ENCODE measurements at regions of chr11 and their contacts with region 1.

Region 1: DNA sequence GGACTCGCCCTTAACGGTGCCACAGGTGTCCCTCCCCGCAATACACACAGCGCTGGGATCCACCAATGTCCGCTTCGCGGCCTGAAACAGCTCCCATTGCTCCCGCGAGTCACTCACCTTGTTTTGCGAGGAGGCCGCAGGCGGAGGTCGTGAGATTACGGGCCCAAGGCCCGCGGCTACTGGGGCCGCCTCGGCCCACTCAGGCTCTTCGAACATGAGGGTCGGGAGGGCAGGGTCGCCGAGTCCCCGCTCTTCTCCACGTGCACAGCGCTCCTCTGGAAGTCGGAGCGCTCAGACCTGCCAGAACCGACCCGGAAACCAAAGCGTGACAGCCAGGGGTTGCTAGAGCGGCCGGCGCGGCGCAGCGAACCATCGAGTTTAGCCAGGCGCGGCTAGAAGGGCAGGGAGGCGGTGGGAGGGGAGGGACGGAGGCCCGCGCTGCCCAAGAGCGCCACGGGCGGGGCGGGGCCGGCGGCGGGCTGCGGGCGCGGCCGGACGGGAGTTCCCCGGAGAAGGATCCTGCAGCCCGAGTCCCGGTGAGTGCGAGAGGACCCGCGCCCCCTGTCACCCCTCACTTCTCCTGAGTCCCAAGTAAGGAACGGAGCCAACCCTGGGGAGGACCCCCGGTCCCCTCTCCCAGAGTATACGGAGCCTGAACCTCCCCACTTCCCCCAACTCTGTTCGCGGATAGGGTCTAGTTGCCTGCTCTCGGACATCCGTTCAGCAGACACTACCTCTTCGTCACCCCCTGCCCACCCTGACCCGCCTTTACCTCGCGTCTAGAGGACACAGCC is at the starts of genes ILK and RRP8:
- DNase-seq: peak; percentile 89
- ATAC-seq: peak; percentile 80
- H3K4me3 ChIP-seq: peak within 1 kb of the TSS; percentile 93
- H3K27ac ChIP-seq: 0 out of 2 replicates have a peak within 1 kb of the TSS, but pooled peaks have one; percentile 5
- H3K4me1 ChIP-seq: peaks cover 38% of the 10 kb centered on the region
- H3K27me3 ChIP-seq: no peaks in the 10 kb centered on the region
- CTCF ChIP-seq: no peak
- total RNA-seq, gene ILK: 73.0 and 73.9 TPM in 2 replicates
- total RNA-seq, gene RRP8: 15.1 and 16.9 TPM in 2 replicates

Region 2: DNA sequence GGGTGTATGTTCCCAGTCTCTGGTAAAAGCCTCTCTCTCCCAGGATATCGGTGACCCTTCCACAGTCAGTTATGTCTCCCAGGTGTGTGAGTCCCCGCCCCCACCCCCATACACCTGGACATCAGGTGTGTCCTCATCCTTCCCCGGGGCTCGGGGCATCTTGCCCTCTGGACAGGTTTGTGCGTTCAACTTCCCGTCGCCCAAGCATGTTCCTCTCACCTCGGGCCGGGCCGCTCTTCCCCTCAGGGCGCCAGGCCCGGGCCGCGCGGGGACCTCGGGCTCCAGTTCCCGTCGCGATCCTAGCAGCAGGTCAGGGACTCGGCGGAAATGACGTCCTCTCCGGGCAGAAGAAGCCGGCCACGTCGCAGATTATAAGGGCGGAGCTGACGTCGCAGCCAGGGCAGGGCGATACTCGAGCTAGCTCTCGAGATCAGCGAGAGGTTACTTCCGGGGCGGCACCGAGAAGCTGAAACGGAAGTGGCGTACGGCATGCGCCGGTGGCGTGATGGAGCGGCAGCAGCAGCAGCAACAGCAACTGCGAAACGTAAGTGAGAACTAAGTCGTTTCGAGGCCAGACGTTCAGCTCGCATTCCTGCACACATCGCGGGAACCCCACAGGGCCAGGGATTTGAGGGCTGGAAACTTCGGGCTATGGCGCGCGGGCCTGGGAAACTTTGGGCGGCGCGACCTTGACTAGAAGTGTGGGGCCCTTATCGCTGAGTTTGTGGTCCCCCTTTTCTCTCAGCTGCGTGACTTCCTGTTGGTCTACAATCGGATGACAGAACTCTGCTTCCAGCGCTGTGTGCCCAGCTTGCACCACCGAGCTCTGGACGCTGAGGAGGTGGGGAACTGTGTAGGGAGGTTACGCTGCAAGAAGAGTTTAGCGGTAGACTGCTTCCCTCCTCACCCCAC is 122.2 kb before region 1 on chr11 and contains the starts of genes ARFIP2 and TIMM10B:
- CTCF ChIA-PET with region 1: no interaction called
- POLR2A ChIA-PET with region 1: no interaction called
- intact Hi-C with region 1: loop called (anchors 5 kb)
- DNase-seq: peak; percentile 97
- ATAC-seq: peak; percentile 95
- H3K4me3 ChIP-seq: peak within 1 kb of the TSS; percentile 95
- H3K27ac ChIP-seq: peak within 1 kb of the TSS; percentile 73
- H3K4me1 ChIP-seq: peaks cover 17% of the 10 kb centered on the region
- H3K27me3 ChIP-seq: no peaks in the 10 kb centered on the region
- CTCF ChIP-seq: no peak
- total RNA-seq, gene ARFIP2: 57.2 and 65.2 TPM in 2 replicates
- total RNA-seq, gene TIMM10B: 25.5 and 26.4 TPM in 2 replicates

Region 3: DNA sequence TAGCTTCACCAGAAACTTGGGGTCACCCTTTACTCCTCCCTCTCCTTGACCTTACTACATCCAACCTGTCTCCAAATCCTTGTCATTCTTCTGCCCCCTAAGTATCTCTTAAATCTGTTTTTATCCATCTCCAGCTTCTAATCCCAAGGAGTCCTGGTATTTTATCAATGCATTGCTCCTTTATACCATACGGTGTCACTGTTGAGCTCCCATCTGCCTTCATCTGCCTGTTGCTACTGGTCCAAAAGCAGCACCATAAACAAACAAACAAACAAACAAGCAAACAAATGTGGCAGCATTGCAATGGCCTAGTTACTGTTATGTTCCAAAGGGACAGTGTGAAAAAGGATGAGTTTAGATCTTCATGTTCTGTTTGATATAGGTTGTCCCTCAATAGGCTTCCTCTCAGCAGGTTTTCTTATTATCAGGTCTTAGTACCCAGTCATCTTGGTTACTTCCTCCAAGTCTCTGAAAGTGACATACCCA is 72.2 kb before region 1 on chr11:
- CTCF ChIA-PET with region 1: no interaction called
- POLR2A ChIA-PET with region 1: no interaction called
- intact Hi-C with region 1: loop called (anchors 5 kb)
- DNase-seq: peak; percentile 60
- ATAC-seq: peak; percentile 71
- H3K4me3 ChIP-seq: no peak overlapping the region
- H3K27ac ChIP-seq: no peak overlapping the region
- H3K4me1 ChIP-seq: no peaks in the 10 kb centered on the region
- H3K27me3 ChIP-seq: no peaks in the 10 kb centered on the region
- CTCF ChIP-seq: peak; percentile 82

Region 4: DNA sequence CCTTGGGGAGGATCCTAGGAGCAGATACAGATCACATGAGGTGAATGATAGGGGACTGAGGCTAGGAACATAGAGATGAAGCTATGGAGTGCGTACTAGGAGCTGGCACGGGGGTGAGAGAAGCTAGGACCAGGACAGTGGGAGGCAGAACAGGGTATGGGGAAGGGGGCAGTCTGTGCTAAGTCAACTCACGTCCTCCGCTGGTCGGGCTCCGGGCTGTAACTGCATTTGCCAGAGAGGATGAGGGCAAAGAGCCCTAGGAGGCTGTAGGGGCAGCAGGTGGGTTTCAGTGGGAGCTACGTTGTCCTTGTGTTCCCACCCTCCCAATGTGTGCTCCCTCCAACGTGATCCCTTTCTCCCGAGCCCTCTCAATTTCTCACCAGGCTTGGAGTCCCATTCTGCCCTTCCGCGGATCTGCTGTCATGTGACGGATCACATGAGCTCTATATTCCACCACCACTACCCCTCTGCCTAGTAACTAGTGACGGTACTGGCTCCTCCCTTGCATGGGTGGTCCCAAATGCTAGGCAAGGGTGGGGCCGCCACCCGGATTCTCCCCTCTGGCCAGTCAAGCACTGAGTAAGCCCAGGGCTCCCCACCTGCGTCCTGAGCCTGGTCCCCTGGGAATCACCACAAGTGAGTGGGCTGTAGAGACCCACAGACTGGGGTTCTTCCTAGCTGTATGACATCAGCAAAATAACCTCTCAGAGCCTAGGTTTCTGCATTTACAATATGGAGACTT is 15.7 kb after region 1 on chr11 and contains the start of gene TPP1:
- CTCF ChIA-PET with region 1: interaction called, 10 read pairs
- POLR2A ChIA-PET with region 1: no interaction called
- intact Hi-C with region 1: no loop called
- DNase-seq: peak; percentile 93
- ATAC-seq: peak; percentile 90
- H3K4me3 ChIP-seq: peak within 1 kb of the TSS; percentile 79
- H3K27ac ChIP-seq: 0 out of 2 replicates have a peak within 1 kb of the TSS, but pooled peaks have one; percentile 1
- H3K4me1 ChIP-seq: peaks cover 14% of the 10 kb centered on the region
- H3K27me3 ChIP-seq: no peaks in the 10 kb centered on the region
- CTCF ChIP-seq: no peak
- total RNA-seq, gene TPP1: 21.6 and 48.3 TPM in 2 replicates

Region 5: GRCh38 chr11:6682936-6683861 is 79.7 kb after region 1 on chr11 and contains the start of gene MRPL17:
- CTCF ChIA-PET with region 1: interaction called, 4 read pairs
- POLR2A ChIA-PET with region 1: no interaction called
- intact Hi-C with region 1: loop called (anchors 1 kb)
- DNase-seq: peak; percentile 98
- ATAC-seq: peak; percentile 94
- H3K4me3 ChIP-seq: peak within 1 kb of the TSS; percentile 81
- H3K27ac ChIP-seq: peak within 1 kb of the TSS; percentile 41
- H3K4me1 ChIP-seq: peaks cover 5% of the 10 kb centered on the region; the same call in 1 of the 2 replicates
- H3K27me3 ChIP-seq: no peaks in the 10 kb centered on the region
- CTCF ChIP-seq: peak; percentile 84
- total RNA-seq, gene MRPL17: 72.5 and 78.1 TPM in 2 replicates

Region 6: GRCh38 chr11:6705905-6706535 is 102.5 kb after region 1 on chr11:
- CTCF ChIA-PET with region 1: interaction called, 3 read pairs
- POLR2A ChIA-PET with region 1: interaction called, 3 read pairs
- intact Hi-C with region 1: loop called (anchors 2 kb)
- DNase-seq: peak; percentile 64
- ATAC-seq: peak; percentile 18; the same call in 1 of the 2 replicates
- H3K4me3 ChIP-seq: no peak overlapping the region
- H3K27ac ChIP-seq: no peak overlapping the region
- H3K4me1 ChIP-seq: peaks cover 8% of the 10 kb centered on the region; the same call in 1 of the 2 replicates
- H3K27me3 ChIP-seq: no peaks in the 10 kb centered on the region
- CTCF ChIP-seq: peak; percentile 78

Region 7: DNA sequence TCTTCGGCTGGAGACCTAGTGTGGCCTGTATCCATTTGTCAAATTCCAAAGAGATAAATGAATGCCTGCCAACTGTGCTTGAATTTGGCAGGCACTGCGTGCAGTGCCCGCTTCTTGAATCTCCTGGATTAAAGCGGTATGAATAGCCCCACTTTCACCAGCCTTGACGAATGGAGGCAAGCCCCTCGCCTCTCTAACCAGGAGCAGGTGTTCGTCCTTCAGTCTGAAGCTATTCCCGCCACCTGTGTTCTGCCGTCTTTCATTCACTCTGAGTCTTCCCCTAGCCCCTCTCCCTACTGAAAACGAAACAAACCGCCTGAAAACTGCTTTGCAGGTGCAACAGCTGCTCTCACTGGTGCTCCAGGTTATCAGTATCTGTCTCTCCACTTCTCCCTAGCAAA is 428.0 kb after region 1 on chr11:
- CTCF ChIA-PET with region 1: no interaction called
- POLR2A ChIA-PET with region 1: no interaction called
- intact Hi-C with region 1: no loop called
- DNase-seq: no peak
- ATAC-seq: no peak
- H3K4me3 ChIP-seq: no peak overlapping the region
- H3K27ac ChIP-seq: no peak overlapping the region
- H3K4me1 ChIP-seq: no peaks in the 10 kb centered on the region
- H3K27me3 ChIP-seq: peaks cover 36% of the 10 kb centered on the region
- CTCF ChIP-seq: no peak

Measured in PC-3 (cell line).